ENCODE measurements at regions of chr9 and their contacts with region 1.

Region 1: DNA sequence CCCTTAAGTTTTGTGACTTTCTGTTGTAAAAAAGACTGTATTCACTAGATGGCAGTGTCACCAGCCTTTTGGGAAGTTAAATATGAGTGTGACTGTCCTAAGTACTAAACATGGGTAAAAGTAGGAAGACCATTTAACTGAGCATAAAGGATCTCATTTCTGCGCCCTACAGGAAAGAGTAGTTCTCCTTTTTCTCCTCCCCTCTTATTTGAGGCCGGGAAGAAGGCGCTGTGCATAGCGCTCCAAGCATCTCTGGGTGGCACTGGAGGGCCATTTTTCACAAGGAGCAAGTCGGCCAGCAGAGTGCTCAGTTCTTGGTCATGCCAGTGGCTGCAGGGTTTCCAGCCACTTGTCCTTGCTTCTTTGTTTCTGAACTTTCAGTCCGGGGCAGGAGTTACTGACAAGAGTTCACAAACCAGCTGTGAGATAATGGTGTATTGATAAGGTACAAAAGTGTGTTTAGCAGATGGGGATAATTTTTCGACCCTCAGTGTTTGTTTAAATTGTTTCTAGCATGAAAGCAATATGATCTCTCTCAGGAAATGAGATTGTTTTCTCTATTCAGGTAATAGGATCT is 227.6 kb upstream of the DMRT1 start:
- DNase-seq: peak; percentile 75 to 81 (median 81)
- ATAC-seq: peak; percentile 94 to 98 (median 96)
- H3K4me3 ChIP-seq: no peak overlapping the region
- H3K27ac ChIP-seq: peak overlapping the region in 1 of 3 donors; percentile 12
- H3K4me1 ChIP-seq: peaks cover 0 to 29% (median 3%) of the 10 kb centered on the region in 4 donors
- H3K27me3 ChIP-seq: no peaks in the 10 kb centered on the region
- CTCF ChIP-seq: peak; percentile 85 to 92 (median 87)
- POLR2A ChIP-seq: no peak

Region 2: GRCh38 chr9:763692-764524 is 150.0 kb after region 1 on chr9:
- intact Hi-C with region 1: loop called in 1 of 2 experiments (anchors 5 kb)
- DNase-seq: peak in 2 of 3 donors; percentile 51 to 63
- ATAC-seq: peak; percentile 91 to 99 (median 97)
- H3K4me3 ChIP-seq: no peak overlapping the region
- H3K27ac ChIP-seq: no peak overlapping the region
- H3K4me1 ChIP-seq: no peaks in the 10 kb centered on the region
- H3K27me3 ChIP-seq: no peaks in the 10 kb centered on the region
- CTCF ChIP-seq: peak; percentile 80 to 89 (median 87)
- POLR2A ChIP-seq: no peak

Region 3: GRCh38 chr9:1083325-1083913 is 469.6 kb after region 1 on chr9:
- intact Hi-C with region 1: no loop called
- DNase-seq: no peak
- ATAC-seq: no peak
- H3K4me3 ChIP-seq: no peak overlapping the region
- H3K27ac ChIP-seq: no peak overlapping the region
- H3K4me1 ChIP-seq: no peaks in the 10 kb centered on the region
- H3K27me3 ChIP-seq: no peaks in the 10 kb centered on the region
- CTCF ChIP-seq: no peak
- POLR2A ChIP-seq: no peak

Measured in right lobe of liver (tissue), 6 donors.